HAP-1 (cell line): ENCODE measurements at regions of chr2 and their contacts with region 1.

Region 1: GRCh38 chr2:2101924-2102323 is 229.2 kb downstream of the MYT1L start:
- DNase-seq: no peak
- H3K4me3 ChIP-seq: no peak overlapping the region
- H3K4me1 ChIP-seq: no peaks in the 10 kb centered on the region
- H3K27me3 ChIP-seq: no peaks in the 10 kb centered on the region

Region 2: DNA sequence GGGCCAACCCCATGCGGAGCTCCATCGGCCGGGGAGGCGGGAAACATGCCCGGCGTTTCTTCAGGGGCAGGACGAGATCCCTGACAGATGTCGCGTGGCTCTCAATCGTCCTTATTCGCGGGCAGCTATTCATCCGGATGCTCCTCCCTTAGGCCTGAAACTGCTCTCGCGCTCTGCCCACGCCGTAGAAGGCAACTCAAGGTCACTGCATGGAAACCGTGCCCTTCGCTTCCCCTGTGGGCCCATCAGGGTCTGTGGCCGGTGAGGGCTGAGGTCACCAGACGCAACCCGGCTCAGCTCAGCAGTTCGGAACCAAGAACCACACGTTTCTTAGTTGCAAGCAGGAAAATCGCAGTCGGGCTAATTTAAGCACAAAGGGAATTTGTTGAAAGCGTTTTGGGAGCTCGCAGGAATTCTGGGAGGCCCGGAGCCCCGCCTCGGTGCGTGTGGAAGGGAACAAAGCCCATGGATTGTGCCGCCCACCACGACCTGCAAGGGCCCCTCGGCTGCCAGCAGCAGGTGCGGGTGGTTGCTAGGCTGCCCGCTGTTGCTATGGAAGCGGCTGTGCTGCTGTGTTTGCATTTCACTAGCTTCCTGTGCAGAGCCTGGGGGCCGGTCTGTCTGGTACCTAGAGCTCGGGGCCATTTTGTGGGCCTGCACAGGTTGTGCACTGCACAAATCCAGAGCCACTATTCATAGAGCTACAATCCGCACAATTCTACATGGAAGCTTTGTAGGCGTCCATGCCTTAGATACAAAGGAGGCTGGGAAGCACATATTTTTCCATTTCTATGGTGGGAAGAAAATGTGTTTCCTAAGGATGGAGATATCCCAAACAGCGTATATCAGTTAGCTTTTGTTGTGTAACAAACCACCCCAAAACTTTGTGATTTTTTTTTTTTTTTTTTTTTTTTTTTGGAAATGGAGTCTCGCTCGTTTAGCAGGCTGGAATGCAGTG is 1550.0 kb after region 1 on chr2:
- in situ Hi-C with region 1: loop called (anchors 25 kb)
- DNase-seq: peak; percentile 40 to 77
- H3K4me3 ChIP-seq: no peak overlapping the region
- H3K4me1 ChIP-seq: peaks cover 2% of the 10 kb centered on the region; the same call in 1 of the 2 replicates
- H3K27me3 ChIP-seq: no peaks in the 10 kb centered on the region